ENCODE measurements at regions of chr11 and their contacts with region 1.

Region 1: DNA sequence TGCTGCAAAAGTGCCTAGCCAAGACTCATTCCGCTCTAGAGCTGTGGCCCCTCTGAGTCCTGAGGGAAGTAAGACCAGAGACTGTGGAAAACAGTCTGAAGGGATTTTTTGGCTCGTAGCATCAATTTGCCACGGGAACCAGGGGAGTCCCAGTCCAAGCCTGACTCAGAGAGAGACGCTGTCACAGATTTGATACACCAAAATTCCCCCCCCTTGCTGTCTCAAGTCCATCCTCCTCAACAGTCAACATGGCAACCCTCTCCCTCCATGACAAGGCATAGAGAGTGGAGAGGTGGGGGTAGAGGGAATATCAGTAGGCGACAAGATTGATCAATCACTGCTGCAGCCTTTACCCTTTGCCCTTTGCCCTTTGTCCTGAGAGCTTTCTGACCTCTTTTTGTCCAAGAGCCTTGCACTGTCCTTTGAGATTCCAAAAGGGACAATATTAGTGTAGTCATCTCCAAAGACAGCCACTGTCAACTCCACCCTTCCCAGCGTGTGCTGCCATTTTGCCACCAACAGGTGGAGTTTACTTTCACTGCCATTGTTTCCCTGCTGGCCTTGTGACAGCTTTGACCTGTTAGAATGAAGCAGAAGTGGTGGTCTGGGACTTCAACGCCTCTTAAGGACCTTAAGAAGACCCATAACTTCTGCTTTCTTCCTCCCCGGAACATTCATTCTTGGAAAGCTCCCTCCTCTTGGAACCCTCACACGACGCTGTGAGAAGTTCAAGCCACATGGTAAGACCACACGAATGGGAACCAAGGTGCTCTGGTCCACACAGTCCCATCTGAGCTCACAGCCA is 7.3 kb downstream of the SLC15A3 start:
- DNase-seq: no peak

Region 2: GRCh38 chr11:60891103-60891741 is 53.5 kb before region 1 on chr11:
- intact Hi-C with region 1: no loop called
- DNase-seq: no peak

Region 3: GRCh38 chr11:61004180-61004611 is 59.5 kb after region 1 on chr11:
- intact Hi-C with region 1: loop called (anchors 10 kb)
- DNase-seq: peak in 1 of 42 donors; percentile 30

Region 4: GRCh38 chr11:61129639-61130523 is 185.2 kb after region 1 on chr11:
- intact Hi-C with region 1: loop called (anchors 10 kb)
- DNase-seq: peak; percentile 81 to 95 (median 89)